Activated CD8-positive, alpha-beta T cell treated with anti-CD3 and anti-CD28 coated beads, Interleukin-2, amount 10 ng/mL, durations not matched to agents 7 days and 5 days (primary cell): ENCODE measurements at regions of chr20 and their contacts with region 1.

Region 1: GRCh38 chr20:2742934-2743559 is 50.5 kb downstream of the EBF4 start:
- DNase-seq: peak; percentile 80
- ATAC-seq: peak; percentile 70
- H3K4me3 Mint-ChIP-seq: no peak overlapping the region
- H3K27ac Mint-ChIP-seq: peak overlapping the region; percentile 62
- H3K4me1 Mint-ChIP-seq: peaks cover 32% of the 10 kb centered on the region
- H3K27me3 Mint-ChIP-seq: peaks cover 18% of the 10 kb centered on the region

Region 2: GRCh38 chr20:2698921-2699335 is 44.1 kb before region 1 on chr20:
- CTCF ChIA-PET with region 1: interaction called, 11 read pairs
- POLR2A ChIA-PET with region 1: no interaction called
- DNase-seq: no peak
- ATAC-seq: no peak
- H3K4me3 Mint-ChIP-seq: no peak overlapping the region
- H3K27ac Mint-ChIP-seq: no peak overlapping the region
- H3K4me1 Mint-ChIP-seq: no peaks in the 10 kb centered on the region
- H3K27me3 Mint-ChIP-seq: peaks cover 28% of the 10 kb centered on the region

Region 3: DNA sequence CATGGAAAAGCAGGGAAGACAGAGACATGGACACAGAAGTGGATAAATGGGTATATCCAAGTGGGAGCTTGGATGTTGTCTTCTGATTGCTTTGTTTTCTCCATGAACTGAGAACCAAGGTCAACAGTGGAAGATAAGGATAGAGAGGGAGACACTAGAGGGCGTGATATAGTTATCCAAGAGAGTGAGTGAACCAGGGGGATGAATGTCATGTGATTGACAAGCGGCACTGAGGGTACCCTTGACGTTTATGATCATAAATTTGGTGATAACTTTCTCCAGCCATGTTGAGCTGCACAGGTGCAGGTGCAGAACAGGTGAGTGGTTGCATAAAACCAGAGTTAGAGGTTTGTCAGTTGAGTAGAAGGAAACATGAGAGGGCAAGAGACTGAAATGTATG is 29.8 kb before region 1 on chr20:
- CTCF ChIA-PET with region 1: interaction called, 51 read pairs
- POLR2A ChIA-PET with region 1: no interaction called
- DNase-seq: no peak
- ATAC-seq: peak; percentile 60
- H3K4me3 Mint-ChIP-seq: no peak overlapping the region
- H3K27ac Mint-ChIP-seq: no peak overlapping the region
- H3K4me1 Mint-ChIP-seq: no peaks in the 10 kb centered on the region
- H3K27me3 Mint-ChIP-seq: peaks cover 6% of the 10 kb centered on the region

Region 4: GRCh38 chr20:2729251-2729713 is 13.8 kb before region 1 on chr20:
- CTCF ChIA-PET with region 1: interaction called, 76 read pairs
- POLR2A ChIA-PET with region 1: interaction called, 13 read pairs
- DNase-seq: peak; percentile 51
- ATAC-seq: peak; percentile 90
- H3K4me3 Mint-ChIP-seq: peak overlapping the region; percentile 6
- H3K27ac Mint-ChIP-seq: peak overlapping the region; percentile 77
- H3K4me1 Mint-ChIP-seq: peaks cover 11% of the 10 kb centered on the region
- H3K27me3 Mint-ChIP-seq: peaks cover 17% of the 10 kb centered on the region

Region 5: GRCh38 chr20:2825761-2826160 is 82.7 kb after region 1 on chr20:
- CTCF ChIA-PET with region 1: no interaction called
- POLR2A ChIA-PET with region 1: no interaction called
- DNase-seq: no peak
- ATAC-seq: peak; percentile 48
- H3K4me3 Mint-ChIP-seq: peak overlapping the region; percentile 36
- H3K27ac Mint-ChIP-seq: no peak overlapping the region
- H3K4me1 Mint-ChIP-seq: peaks cover 26% of the 10 kb centered on the region
- H3K27me3 Mint-ChIP-seq: peaks cover 44% of the 10 kb centered on the region